Gastrocnemius medialis (tissue), 4 donors: ENCODE measurements at regions of chr13 and their contacts with region 1.

Region 1: DNA sequence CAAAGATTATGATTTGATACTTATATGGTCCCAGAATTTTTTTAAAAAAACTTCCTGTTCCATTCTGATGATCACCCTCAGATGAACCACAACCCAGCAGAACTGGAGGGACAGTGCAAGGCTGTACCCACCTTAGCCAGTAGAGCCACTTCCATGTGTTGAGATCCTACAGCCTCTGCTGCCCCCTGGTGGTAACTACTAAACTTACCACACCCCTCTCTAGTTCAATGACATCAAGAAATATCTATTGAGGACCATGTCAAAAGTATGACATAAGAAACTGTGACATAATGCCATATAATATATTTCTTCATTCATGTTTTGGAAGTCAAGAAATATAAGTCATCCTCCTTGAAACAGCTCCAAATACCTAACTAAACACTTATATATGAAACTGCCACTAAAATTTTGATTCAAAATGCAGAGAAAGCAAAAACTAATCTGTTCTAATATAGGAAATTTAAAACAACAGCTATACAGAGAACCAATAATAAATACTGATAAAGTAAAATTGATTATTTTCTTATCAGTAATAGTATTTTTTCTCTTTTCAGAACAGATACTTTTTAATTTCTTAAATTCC is 412.6 kb downstream of the KCTD12 start:
- DNase-seq: peak; percentile 22 to 58
- ATAC-seq: peak; percentile 89 to 94
- H3K4me3 ChIP-seq: no peak overlapping the region
- H3K27ac ChIP-seq: peak overlapping the region in 1 of 4 donors; percentile 29
- H3K4me1 ChIP-seq: peaks cover 0 to 10% of the 10 kb centered on the region in 2 donors
- H3K27me3 ChIP-seq: no peaks in the 10 kb centered on the region
- CTCF ChIP-seq: peak; percentile 78 to 91 (median 82)
- POLR2A ChIP-seq: no peak

Region 2: GRCh38 chr13:75670496-75670895 is 803.1 kb before region 1 on chr13:
- in situ Hi-C with region 1: loop called in 2 of 4 experiments (anchors 25 kb)
- intact Hi-C with region 1: loop called (anchors 5 kb)
- DNase-seq: no peak
- ATAC-seq: no peak
- H3K4me3 ChIP-seq: no peak overlapping the region
- H3K27ac ChIP-seq: no peak overlapping the region
- H3K4me1 ChIP-seq: peaks cover 41 to 44% of the 10 kb centered on the region in 2 donors
- H3K27me3 ChIP-seq: no peaks in the 10 kb centered on the region
- CTCF ChIP-seq: no peak
- POLR2A ChIP-seq: no peak

Region 3: DNA sequence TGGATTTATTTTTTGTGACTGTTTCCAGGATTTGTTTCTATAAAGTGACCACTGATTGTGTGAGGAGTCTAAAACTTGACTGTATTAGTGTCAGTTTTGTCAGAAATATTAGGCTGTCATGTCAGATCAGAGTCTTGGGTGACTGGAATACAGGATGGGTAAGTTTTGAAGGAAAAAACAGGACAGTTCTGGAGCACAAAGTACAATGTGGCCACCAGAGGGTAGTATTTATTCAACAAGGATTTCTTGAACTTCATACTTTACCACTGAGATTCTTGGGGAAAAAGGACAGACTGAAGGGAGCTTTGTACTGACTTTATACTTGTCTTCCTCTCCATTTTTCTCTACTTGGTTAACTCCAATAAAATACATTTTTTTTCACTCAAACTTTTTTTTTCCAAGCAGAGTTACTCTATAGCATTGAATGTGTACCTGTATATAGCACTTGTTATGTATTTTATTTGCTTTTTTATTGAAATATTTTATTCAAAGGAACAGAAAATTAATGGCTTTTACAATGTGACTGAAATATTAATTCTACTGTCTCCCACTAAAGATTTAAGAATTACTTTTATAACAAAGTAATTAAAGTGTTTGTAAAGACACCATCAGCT is 786.4 kb before region 1 on chr13:
- in situ Hi-C with region 1: loop called in 3 of 4 experiments (anchors 10 to 25 kb)
- intact Hi-C with region 1: no loop called
- DNase-seq: no peak
- ATAC-seq: peak in 1 of 2 donors; percentile 23
- H3K4me3 ChIP-seq: no peak overlapping the region
- H3K27ac ChIP-seq: no peak overlapping the region
- H3K4me1 ChIP-seq: no peaks in the 10 kb centered on the region
- H3K27me3 ChIP-seq: no peaks in the 10 kb centered on the region
- CTCF ChIP-seq: peak in 3 of 5 experiments; percentile 15 to 46 (median 34)
- POLR2A ChIP-seq: no peak

Region 4: DNA sequence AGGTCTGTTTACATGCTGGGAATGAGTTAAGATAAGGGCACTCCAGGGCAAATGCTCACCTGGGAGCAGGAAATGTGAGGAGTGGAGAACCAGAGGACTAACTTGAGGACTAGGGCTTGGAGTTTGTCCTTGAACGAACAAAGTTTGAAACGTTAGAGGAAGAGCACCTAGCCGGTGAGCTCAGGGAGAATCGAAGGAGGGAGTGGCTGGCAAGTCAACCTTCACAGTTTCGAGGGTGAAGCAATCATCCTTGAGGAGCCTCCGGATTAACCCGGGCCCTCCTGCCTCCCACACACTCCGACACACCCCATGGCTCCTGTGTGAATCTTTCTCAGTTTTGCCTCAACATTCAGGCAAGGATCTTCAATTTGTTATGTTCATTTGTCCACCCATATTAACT is 778.9 kb before region 1 on chr13:
- in situ Hi-C with region 1: loop called (anchors 5 to 25 kb)
- intact Hi-C with region 1: loop called (anchors 2 kb)
- DNase-seq: no peak
- ATAC-seq: no peak
- H3K4me3 ChIP-seq: no peak overlapping the region
- H3K27ac ChIP-seq: no peak overlapping the region
- H3K4me1 ChIP-seq: peaks cover 0 to 4% of the 10 kb centered on the region in 2 donors
- H3K27me3 ChIP-seq: no peaks in the 10 kb centered on the region
- CTCF ChIP-seq: no peak
- POLR2A ChIP-seq: no peak

Region 5: GRCh38 chr13:75876360-75877050 is 597.1 kb before region 1 on chr13:
- in situ Hi-C with region 1: loop called (anchors 5 kb)
- intact Hi-C with region 1: loop called (anchors 1 kb)
- DNase-seq: peak; percentile 11 to 36
- ATAC-seq: peak; percentile 78 to 85
- H3K4me3 ChIP-seq: no peak overlapping the region
- H3K27ac ChIP-seq: no peak overlapping the region
- H3K4me1 ChIP-seq: no peaks in the 10 kb centered on the region
- H3K27me3 ChIP-seq: no peaks in the 10 kb centered on the region
- CTCF ChIP-seq: peak; percentile 78 to 88 (median 80)
- POLR2A ChIP-seq: no peak

Region 6: GRCh38 chr13:76286178-76286577 is 187.5 kb before region 1 on chr13:
- in situ Hi-C with region 1: no loop called
- intact Hi-C with region 1: no loop called
- DNase-seq: no peak
- ATAC-seq: peak in 1 of 2 donors; percentile 46
- H3K4me3 ChIP-seq: no peak overlapping the region
- H3K27ac ChIP-seq: peak overlapping the region in 2 of 4 donors; percentile 21 to 26
- H3K4me1 ChIP-seq: peaks cover 0 to 5% of the 10 kb centered on the region in 2 donors
- H3K27me3 ChIP-seq: no peaks in the 10 kb centered on the region
- CTCF ChIP-seq: no peak
- POLR2A ChIP-seq: no peak

Region 7: GRCh38 chr13:76440568-76440967 is 33.1 kb before region 1 on chr13:
- in situ Hi-C with region 1: no loop called
- intact Hi-C with region 1: no loop called
- DNase-seq: no peak
- ATAC-seq: no peak
- H3K4me3 ChIP-seq: no peak overlapping the region
- H3K27ac ChIP-seq: no peak overlapping the region
- H3K4me1 ChIP-seq: no peaks in the 10 kb centered on the region
- H3K27me3 ChIP-seq: no peaks in the 10 kb centered on the region
- CTCF ChIP-seq: no peak
- POLR2A ChIP-seq: no peak

Region 8: DNA sequence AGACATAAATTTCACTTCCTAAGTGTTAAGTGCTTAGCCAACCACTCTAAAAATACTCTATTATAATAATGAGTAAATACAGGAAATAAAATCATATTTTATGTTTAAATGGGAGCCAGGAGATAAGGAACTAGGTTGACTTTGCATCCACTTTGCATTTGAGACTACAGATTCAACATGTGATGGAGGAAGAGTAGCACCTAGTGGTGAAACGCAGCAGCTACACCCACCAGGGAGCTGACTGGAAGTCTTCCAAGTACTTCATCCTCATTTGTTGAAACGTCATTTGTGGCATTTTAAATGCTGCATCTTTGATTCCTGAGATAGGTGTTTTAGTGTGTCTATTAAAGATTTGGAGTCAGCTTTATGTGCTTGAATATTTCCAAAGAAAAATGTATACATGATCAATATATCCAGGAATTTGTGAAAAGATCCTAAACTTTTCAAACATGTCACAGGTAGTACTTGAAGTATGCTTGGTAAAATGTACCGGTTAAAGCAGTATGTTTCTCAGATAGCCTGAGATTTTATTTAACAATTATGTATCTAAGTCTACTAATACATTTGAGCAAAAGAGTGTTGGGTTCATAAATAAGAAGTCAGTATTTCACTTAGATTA is 430.0 kb after region 1 on chr13:
- in situ Hi-C with region 1: loop called in 2 of 4 experiments (anchors 5 to 25 kb)
- intact Hi-C with region 1: loop called (anchors 5 kb)
- DNase-seq: peak in 1 of 2 donors; percentile 43
- ATAC-seq: peak; percentile 83 to 84
- H3K4me3 ChIP-seq: no peak overlapping the region
- H3K27ac ChIP-seq: no peak overlapping the region
- H3K4me1 ChIP-seq: no peaks in the 10 kb centered on the region
- H3K27me3 ChIP-seq: no peaks in the 10 kb centered on the region
- CTCF ChIP-seq: peak; percentile 78 to 96 (median 85)
- POLR2A ChIP-seq: no peak